ENCODE measurements at regions of chr1 and their contacts with region 1.

Region 1: DNA sequence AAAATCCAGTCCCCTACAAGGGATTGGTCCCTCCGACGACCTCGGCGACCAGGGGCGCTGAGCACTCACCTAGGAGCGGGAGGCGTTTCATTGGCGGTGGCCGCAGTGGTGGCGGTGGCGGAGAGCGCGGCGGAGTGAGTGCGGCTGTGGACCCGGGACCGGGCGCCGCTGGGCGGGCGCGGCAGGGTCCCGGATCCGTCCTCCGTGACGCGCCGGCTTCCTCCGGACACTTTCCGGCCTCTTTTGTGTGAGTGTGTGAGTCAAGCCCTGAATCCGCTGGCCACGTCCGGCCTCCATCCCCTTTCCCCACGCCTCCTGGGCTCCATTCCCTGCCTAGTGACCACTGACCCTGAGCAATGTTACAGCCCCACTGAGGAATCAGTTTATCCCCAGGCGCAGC is at the start of gene ADGRL4:
- DNase-seq: peak; percentile 57 to 78
- ATAC-seq: peak; percentile 95 to 99 (median 96)
- H3K4me3 ChIP-seq: peak within 1 kb of the TSS in 9 of 10 donors; percentile 32 to 65 (median 56)
- H3K27ac ChIP-seq: peak within 1 kb of the TSS; percentile 54 to 94 (median 87)
- H3K4me1 ChIP-seq: peaks cover 0 to 13% (median 3%) of the 10 kb centered on the region in 9 donors
- H3K27me3 ChIP-seq: peaks cover 0 to 12% (median 8%) of the 10 kb centered on the region in 7 donors
- CTCF ChIP-seq: no peak
- total RNA-seq, gene ADGRL4: 10.7 to 33.9 (median 17.2) TPM

Region 2: DNA sequence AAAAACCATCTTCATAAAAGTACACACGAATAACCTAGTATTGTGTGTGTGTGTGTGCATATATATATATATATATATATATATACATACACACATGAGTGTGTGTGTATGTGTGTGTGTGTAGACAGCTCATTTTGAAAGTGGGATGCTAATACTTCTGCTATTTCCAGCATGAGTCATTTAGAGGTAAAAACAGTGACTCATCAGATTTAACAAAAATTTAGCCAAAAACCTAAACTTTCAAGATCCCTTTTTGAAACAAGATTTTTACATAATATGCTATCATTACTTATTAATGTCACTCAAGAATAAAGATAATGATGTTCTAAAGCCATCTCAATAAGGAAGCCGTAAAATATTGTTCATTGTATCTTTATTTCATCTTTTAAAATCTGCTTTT is 35.6 kb after region 1 on chr1:
- intact Hi-C with region 1: loop called in 1 of 10 experiments (anchors 5 kb)
- DNase-seq: no peak
- ATAC-seq: no peak
- H3K4me3 ChIP-seq: no peak overlapping the region
- H3K27ac ChIP-seq: no peak overlapping the region
- H3K4me1 ChIP-seq: peaks cover 0 to 10% (median 0%) of the 10 kb centered on the region in 9 donors
- H3K27me3 ChIP-seq: no peaks in the 10 kb centered on the region
- CTCF ChIP-seq: no peak

Region 3: DNA sequence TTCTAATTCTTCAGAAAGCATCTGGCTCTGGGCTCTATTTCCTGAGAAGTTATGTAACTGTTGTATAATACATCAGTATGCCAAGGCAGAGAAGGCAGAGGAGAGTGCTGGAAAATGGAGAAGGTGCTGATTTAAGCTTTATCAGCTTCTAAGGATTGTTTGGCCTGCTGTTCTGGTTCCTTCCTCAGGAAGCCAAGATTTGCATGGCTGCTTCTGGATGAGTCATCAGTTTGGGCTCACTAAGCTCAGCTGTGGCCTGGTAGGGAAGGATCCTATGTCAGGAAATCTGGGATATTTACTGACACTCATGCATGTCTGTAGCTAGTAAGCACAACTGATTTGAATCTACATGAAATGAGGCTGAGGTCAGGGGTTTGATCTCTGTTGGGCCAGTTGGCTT is 73.2 kb after region 1 on chr1:
- intact Hi-C with region 1: loop called in 1 of 10 experiments (anchors 5 kb)
- DNase-seq: peak in 1 of 2 donors; percentile 60
- ATAC-seq: peak; percentile 79 to 97 (median 92)
- H3K4me3 ChIP-seq: no peak overlapping the region
- H3K27ac ChIP-seq: peak overlapping the region in 5 of 10 donors; percentile 37 to 67 (median 48)
- H3K4me1 ChIP-seq: peaks cover 0 to 31% (median 5%) of the 10 kb centered on the region in 9 donors
- H3K27me3 ChIP-seq: no peaks in the 10 kb centered on the region
- CTCF ChIP-seq: no peak

Region 4: DNA sequence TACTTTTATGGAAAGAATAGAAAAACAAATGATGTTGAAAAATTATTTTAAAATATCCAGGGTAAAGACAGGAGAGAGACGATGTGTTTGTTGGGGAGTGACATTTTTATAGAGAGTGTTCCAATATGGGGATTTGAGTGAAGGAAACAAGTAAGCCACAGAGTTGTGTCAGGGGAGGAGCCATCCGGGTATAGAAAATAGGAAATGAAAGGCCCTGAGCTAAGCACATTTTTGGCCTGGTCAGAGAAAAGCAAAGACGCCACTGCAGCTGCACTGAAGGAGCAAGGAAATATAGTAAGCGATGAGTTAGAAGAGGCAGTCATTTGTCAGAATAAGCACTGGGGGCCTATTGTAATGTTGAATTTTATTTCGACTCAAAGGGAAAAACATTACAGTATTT is 107.3 kb after region 1 on chr1:
- intact Hi-C with region 1: no loop called
- DNase-seq: no peak
- ATAC-seq: no peak
- H3K4me3 ChIP-seq: no peak overlapping the region
- H3K27ac ChIP-seq: no peak overlapping the region
- H3K4me1 ChIP-seq: no peaks in the 10 kb centered on the region
- H3K27me3 ChIP-seq: no peaks in the 10 kb centered on the region
- CTCF ChIP-seq: no peak

Region 5: DNA sequence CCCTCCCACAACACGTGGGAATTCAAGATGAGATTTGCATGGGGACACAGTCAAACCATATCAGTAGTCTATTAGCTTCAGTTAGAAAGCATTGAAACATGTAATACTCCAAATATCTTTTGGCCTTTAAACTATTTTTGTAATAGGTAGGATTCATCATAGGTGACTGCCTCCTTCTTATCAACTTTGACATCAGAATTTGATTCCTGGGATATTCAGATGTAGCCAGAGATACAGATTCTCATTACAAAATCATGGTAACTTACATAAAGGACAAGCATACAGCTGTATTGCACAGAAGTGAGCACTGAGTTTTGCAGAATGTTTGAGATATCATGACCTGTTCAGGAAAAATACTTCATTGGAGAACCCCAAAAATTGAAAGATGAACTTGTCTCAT is 173.5 kb after region 1 on chr1:
- intact Hi-C with region 1: no loop called
- DNase-seq: no peak
- ATAC-seq: no peak
- H3K4me3 ChIP-seq: no peak overlapping the region
- H3K27ac ChIP-seq: no peak overlapping the region
- H3K4me1 ChIP-seq: no peaks in the 10 kb centered on the region
- H3K27me3 ChIP-seq: no peaks in the 10 kb centered on the region
- CTCF ChIP-seq: no peak

Region 6: GRCh38 chr1:79193211-79194079 is 186.9 kb after region 1 on chr1:
- intact Hi-C with region 1: loop called in 1 of 10 experiments (anchors 5 kb)
- DNase-seq: peak in 1 of 2 donors; percentile 13
- ATAC-seq: peak; percentile 51 to 92 (median 77)
- H3K4me3 ChIP-seq: peak overlapping the region in 2 of 10 donors; percentile 1 to 2
- H3K27ac ChIP-seq: peak overlapping the region in 6 of 10 donors; percentile 29 to 70 (median 51)
- H3K4me1 ChIP-seq: peaks cover 0 to 17% (median 0%) of the 10 kb centered on the region in 9 donors
- H3K27me3 ChIP-seq: no peaks in the 10 kb centered on the region
- CTCF ChIP-seq: no peak

Region 7: DNA sequence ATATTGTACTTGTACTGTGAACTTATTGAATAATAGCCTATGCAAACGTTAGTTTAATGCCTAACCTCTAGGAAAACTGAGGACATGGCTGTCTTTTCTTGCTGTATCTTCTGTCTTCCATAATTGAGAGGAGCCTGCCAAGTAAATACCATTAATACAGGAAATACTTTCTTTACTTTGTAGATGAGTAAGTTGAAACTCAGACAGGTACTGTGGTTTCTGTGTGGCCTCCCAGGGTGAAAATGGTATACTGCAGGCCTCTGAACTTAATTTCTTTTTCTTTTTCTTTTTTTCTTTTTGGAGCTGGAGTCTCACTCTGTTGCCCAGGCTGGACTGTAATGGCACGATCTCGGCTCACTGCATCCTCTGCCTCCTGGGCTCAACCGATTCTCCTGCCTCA is 208.7 kb after region 1 on chr1:
- intact Hi-C with region 1: no loop called
- DNase-seq: no peak
- ATAC-seq: no peak
- H3K4me3 ChIP-seq: no peak overlapping the region
- H3K27ac ChIP-seq: no peak overlapping the region
- H3K4me1 ChIP-seq: no peaks in the 10 kb centered on the region
- H3K27me3 ChIP-seq: no peaks in the 10 kb centered on the region
- CTCF ChIP-seq: no peak

Region 8: GRCh38 chr1:80706526-80706925 is 1700.0 kb after region 1 on chr1:
- intact Hi-C with region 1: no loop called
- DNase-seq: no peak
- ATAC-seq: no peak
- H3K4me3 ChIP-seq: no peak overlapping the region
- H3K27ac ChIP-seq: no peak overlapping the region
- H3K4me1 ChIP-seq: no peaks in the 10 kb centered on the region
- H3K27me3 ChIP-seq: no peaks in the 10 kb centered on the region
- CTCF ChIP-seq: no peak